Activated CD4-positive, alpha-beta T cell treated with anti-CD3 and anti-CD28 coated beads for 36 hours (primary cell): ENCODE measurements at regions of chr1 and their contacts with region 1.

Region 1: GRCh38 chr1:22673486-22674409 is 20.7 kb downstream of the C1QB start:
- DNase-seq: peak; percentile 58
- ATAC-seq: peak; percentile 95
- H3K4me3 Mint-ChIP-seq: no peak overlapping the region
- H3K27ac Mint-ChIP-seq: no peak overlapping the region
- H3K4me1 Mint-ChIP-seq: no peaks in the 10 kb centered on the region
- H3K27me3 Mint-ChIP-seq: peaks cover 32% of the 10 kb centered on the region

Region 2: GRCh38 chr1:22889213-22889827 is 215.6 kb after region 1 on chr1:
- CTCF ChIA-PET with region 1: no interaction called
- POLR2A ChIA-PET with region 1: no interaction called
- intact Hi-C with region 1: loop called in 1 of 2 experiments (anchors 1 kb)
- DNase-seq: peak; percentile 26
- ATAC-seq: no peak
- H3K4me3 Mint-ChIP-seq: no peak overlapping the region
- H3K27ac Mint-ChIP-seq: no peak overlapping the region
- H3K4me1 Mint-ChIP-seq: peaks cover 9% of the 10 kb centered on the region
- H3K27me3 Mint-ChIP-seq: peaks cover 2% of the 10 kb centered on the region